Panc1 (cell line): ENCODE measurements at regions of chr10 and their contacts with region 1.

Region 1: DNA sequence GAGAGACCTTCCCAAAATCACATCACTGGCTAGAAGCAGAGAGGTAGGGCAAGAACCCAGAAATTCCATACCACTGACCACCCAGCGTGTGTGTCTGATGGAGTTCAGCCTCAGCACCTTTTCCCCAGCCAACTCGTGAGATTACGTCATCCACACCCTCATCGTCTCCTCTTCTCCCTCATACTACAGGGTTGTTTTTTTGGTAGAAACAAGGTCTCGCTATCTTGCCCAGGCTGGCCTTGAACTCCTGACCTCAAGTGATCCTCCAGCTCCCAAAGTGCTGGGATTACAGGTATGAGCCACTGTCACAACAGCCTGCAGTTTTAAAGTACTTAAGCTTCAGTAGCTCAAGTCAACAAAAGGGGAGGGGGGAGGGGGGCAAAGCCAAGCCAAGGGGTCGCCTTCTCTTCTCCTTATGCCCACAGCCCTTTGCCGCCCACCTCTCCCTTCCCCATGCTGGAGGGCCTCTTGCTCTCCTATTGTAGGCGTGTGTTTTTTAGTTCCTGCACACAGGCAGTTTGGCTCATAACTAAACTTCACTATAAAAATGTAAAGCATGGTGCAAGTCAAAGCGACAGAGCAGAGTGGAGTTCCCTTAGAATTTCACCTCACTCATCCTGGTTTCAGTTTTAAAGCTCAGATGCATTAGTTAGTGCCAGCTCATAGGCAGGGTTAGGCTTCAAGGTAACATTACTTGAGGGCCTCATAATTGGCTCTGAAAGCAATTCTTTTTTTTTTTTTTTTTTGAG is 5.2 kb upstream of the PRDX3 start:
- DNase-seq: no peak
- ATAC-seq: no peak; the same call in 1 of the 2 replicates
- H3K4me3 ChIP-seq: no peak overlapping the region
- H3K27ac ChIP-seq: no peak overlapping the region
- H3K4me1 ChIP-seq: peaks cover 6% of the 10 kb centered on the region
- H3K27me3 ChIP-seq: no peaks in the 10 kb centered on the region
- CTCF ChIP-seq: no peak

Region 2: GRCh38 chr10:119149723-119150122 is 34.1 kb before region 1 on chr10:
- CTCF ChIA-PET with region 1: no interaction called
- POLR2A ChIA-PET with region 1: interaction called, 10 read pairs
- in situ Hi-C with region 1: no loop called
- intact Hi-C with region 1: no loop called
- DNase-seq: no peak
- ATAC-seq: 0 out of 2 replicates have a peak, but pooled peaks have one; percentile 59
- H3K4me3 ChIP-seq: no peak overlapping the region
- H3K27ac ChIP-seq: no peak overlapping the region
- H3K4me1 ChIP-seq: no peaks in the 10 kb centered on the region
- H3K27me3 ChIP-seq: no peaks in the 10 kb centered on the region
- CTCF ChIP-seq: no peak

Region 3: DNA sequence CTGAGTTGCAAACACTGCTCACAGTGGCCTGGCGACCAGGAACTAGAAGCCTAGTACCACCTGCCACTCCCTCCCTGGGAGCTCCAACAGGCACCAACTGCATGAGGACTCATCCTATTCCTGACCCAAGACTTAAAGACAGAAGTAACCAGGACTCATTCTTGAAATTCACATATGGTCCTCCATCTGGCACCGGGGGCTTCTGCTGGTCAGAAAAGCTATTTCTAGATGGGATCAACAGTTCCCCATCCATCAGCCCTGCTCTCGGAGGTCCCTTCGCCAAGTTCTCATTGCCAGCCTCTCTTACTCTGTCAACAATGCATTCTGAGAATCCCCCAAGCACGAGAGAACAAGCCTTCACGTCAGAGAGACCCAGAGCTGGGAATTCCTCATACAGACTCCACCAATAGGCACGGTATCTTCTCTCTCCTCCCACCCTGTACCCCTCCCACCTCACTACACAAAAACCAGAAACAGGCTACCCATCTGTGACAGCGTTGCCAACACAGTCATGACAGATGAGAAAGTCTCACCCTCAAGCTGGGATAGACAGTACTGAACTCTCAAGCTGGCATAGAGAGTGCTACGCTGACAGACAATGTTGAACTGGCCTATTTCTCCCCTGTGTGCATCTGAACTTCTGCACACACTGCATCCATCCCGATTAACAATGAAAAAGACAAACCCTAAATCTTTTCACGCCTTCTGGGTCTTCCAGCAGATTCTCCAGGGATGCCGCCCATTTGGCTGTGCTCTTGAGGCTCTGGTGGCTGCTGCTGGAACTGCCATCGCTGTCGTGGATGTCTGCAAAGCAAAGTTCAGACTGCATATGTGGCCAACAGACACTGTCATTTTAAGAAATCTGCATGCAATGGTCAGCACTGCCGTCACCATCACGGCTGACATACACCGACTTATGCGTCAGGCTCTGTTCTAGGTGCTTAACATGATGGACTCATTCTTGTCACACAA is 343.1 kb after region 1 on chr10:
- CTCF ChIA-PET with region 1: no interaction called
- POLR2A ChIA-PET with region 1: no interaction called
- in situ Hi-C with region 1: no loop called
- intact Hi-C with region 1: no loop called
- DNase-seq: no peak
- ATAC-seq: peak; percentile 56; the same call in 1 of the 2 replicates
- H3K4me3 ChIP-seq: no peak overlapping the region
- H3K27ac ChIP-seq: no peak overlapping the region
- H3K4me1 ChIP-seq: peaks cover 6% of the 10 kb centered on the region; the same call in 1 of the 2 replicates
- H3K27me3 ChIP-seq: no peaks in the 10 kb centered on the region
- CTCF ChIP-seq: no peak